ENCODE measurements at regions of chr9 and their contacts with region 1.

Region 1: GRCh38 chr9:97479496-97480159 is 21.8 kb upstream of the TMOD1 start:
- DNase-seq: no peak
- H3K4me3 Mint-ChIP-seq: no peak overlapping the region
- H3K27ac Mint-ChIP-seq: no peak overlapping the region
- H3K4me1 Mint-ChIP-seq: no peaks in the 10 kb centered on the region
- H3K27me3 Mint-ChIP-seq: no peaks in the 10 kb centered on the region

Region 2: DNA sequence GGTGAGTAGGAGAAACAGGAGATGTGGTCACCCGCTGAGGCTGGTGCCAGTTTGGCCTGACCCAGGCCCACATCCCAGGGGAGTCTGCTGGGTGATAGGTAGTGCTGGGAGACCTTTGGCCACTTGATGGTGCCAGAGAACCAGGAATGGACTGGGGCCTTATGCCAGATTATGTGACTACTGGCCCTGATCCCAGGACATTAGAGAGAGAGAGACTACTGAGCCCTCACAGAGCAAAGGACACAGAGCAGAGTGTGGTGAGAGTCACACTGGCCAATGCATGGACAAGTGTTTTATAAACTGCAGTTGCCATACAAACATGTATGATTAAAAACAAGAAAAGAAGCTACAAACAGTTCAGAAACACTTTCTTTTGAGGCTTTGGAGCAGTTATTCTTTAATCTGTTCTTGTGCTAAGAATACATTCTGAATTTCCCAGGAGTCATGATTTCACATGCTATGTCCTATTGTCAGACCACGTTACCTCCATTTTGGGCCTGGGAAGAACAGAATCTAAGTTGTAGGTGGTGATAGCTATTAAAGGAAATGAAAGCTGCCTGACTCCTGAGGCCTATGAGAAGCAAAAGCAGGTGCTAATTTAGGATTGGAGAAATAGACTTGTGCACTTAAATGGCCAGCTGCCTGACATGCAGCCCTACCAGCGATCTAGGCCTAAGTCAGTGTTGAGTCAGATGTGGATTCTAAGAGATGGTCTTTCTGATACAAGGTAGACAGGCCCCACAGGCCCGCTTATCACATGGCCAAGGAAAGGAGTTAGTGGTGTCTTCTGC is 10.8 kb before region 1 on chr9:
- CTCF ChIA-PET with region 1: interaction called, 11 read pairs
- DNase-seq: peak; percentile 64
- H3K4me3 Mint-ChIP-seq: no peak overlapping the region
- H3K27ac Mint-ChIP-seq: no peak overlapping the region
- H3K4me1 Mint-ChIP-seq: no peaks in the 10 kb centered on the region
- H3K27me3 Mint-ChIP-seq: no peaks in the 10 kb centered on the region